ENCODE measurements at regions of chr15 and their contacts with region 1.

Region 1: GRCh38 chr15:67101911-67102598 is 36.7 kb downstream of the SMAD3 start:
- DNase-seq: peak; percentile 63
- ATAC-seq: peak; percentile 66
- H3K4me3 Mint-ChIP-seq: no peak overlapping the region
- H3K27ac Mint-ChIP-seq: no peak overlapping the region
- H3K4me1 Mint-ChIP-seq: peaks cover 29% of the 10 kb centered on the region
- H3K27me3 Mint-ChIP-seq: no peaks in the 10 kb centered on the region

Region 2: GRCh38 chr15:67049351-67050044 is 52.6 kb before region 1 on chr15:
- CTCF ChIA-PET with region 1: no interaction called
- POLR2A ChIA-PET with region 1: no interaction called
- DNase-seq: no peak
- ATAC-seq: no peak
- H3K4me3 Mint-ChIP-seq: no peak overlapping the region
- H3K27ac Mint-ChIP-seq: no peak overlapping the region
- H3K4me1 Mint-ChIP-seq: peaks cover 24% of the 10 kb centered on the region
- H3K27me3 Mint-ChIP-seq: no peaks in the 10 kb centered on the region

Region 3: DNA sequence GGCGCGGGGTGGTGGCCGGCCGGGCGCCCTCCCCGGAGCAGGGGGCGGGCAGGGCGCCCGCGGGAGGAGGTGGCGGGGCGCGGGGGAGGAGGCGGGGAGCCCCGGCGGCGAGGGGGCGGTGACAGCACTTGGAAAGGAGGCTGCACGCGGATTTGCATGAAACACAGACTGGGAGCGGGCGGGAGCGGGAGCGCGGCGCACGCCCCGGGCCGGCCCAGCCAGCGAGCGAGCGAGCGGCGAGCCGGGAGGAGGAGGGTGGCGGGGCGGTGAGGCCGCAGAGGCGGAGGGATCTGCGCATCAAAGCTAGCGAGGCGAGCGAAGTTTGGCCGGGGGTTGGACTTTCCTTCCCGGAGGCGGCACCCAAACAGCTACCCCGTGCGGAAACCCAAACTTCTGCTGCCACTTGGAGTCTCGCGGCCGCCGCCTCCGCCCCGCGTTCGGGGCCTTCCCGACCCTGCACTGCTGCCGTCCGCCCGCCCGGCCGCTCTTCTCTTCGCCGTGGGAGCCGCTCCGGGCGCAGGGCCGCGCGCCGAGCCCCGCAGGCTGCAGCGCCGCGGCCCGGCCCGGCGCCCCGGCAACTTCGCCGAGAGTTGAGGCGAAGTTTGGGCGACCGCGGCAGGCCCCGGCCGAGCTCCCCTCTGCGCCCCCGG is 36.5 kb before region 1 on chr15 and contains the start of gene SMAD3:
- CTCF ChIA-PET with region 1: interaction called, 8 read pairs
- POLR2A ChIA-PET with region 1: interaction called, 74 read pairs
- DNase-seq: peak; percentile 85
- ATAC-seq: peak; percentile 71
- H3K4me3 Mint-ChIP-seq: peak within 1 kb of the TSS; percentile 95
- H3K27ac Mint-ChIP-seq: peak within 1 kb of the TSS; percentile 87
- H3K4me1 Mint-ChIP-seq: peaks cover 52% of the 10 kb centered on the region
- H3K27me3 Mint-ChIP-seq: peaks cover 20% of the 10 kb centered on the region
- total RNA-seq, gene SMAD3: 26.8 to 27.1 TPM

Region 4: GRCh38 chr15:67080900-67081431 is 21.1 kb before region 1 on chr15:
- CTCF ChIA-PET with region 1: interaction called, 15 read pairs
- POLR2A ChIA-PET with region 1: interaction called, 38 read pairs
- DNase-seq: peak; percentile 49
- ATAC-seq: no peak
- H3K4me3 Mint-ChIP-seq: no peak overlapping the region
- H3K27ac Mint-ChIP-seq: peak overlapping the region; percentile 29
- H3K4me1 Mint-ChIP-seq: peaks cover 91% of the 10 kb centered on the region
- H3K27me3 Mint-ChIP-seq: no peaks in the 10 kb centered on the region

Region 5: GRCh38 chr15:67091071-67091979 is 10.7 kb before region 1 on chr15:
- CTCF ChIA-PET with region 1: interaction called, 8 read pairs
- POLR2A ChIA-PET with region 1: interaction called, 38 read pairs
- DNase-seq: peak; percentile 88
- ATAC-seq: peak; percentile 88
- H3K4me3 Mint-ChIP-seq: peak overlapping the region; percentile 54
- H3K27ac Mint-ChIP-seq: peak overlapping the region; percentile 68
- H3K4me1 Mint-ChIP-seq: peaks cover 100% of the 10 kb centered on the region
- H3K27me3 Mint-ChIP-seq: peaks cover 2% of the 10 kb centered on the region

Region 6: DNA sequence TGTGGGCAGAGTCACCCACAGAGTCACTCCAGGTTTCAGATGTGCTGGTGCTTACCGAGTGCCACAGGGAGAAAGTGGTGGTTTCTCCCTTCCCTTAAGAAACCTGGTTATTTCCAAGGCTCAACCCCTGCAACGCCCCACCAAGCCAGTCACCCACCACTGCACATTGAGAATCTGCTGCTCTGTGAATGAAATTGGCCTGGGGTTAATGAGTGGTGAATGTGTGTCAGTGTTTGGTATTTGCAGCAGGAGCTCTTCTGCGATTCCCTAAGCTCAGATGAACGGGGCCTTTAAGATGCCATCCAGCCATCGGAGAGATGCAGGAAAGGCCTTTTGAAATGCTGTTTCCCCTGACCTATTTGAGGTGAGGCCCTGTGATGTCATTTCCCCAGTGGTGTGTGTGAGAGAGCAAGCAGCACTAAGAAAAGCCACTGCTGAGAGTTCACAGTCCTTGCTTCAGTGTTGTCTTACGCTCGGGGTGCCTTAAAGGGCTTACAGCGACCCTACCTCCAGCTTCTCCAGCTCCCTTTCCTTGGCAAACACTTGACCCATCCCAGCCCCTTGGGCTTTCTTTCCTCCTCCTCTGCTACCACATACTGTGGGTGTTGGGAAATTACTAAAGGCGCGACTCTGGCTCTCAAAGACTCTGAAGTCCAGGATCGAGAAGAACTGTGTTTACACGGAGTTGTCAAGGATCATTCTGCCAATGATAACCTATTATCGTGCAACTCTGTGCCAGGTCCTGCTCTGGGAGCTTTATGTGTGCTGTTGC is 32.2 kb after region 1 on chr15:
- CTCF ChIA-PET with region 1: interaction called, 7 read pairs
- POLR2A ChIA-PET with region 1: interaction called, 23 read pairs
- DNase-seq: peak; percentile 86
- ATAC-seq: peak; percentile 97
- H3K4me3 Mint-ChIP-seq: peak overlapping the region; percentile 78
- H3K27ac Mint-ChIP-seq: peak overlapping the region; percentile 97
- H3K4me1 Mint-ChIP-seq: peaks cover 90% of the 10 kb centered on the region
- H3K27me3 Mint-ChIP-seq: no peaks in the 10 kb centered on the region

Measured in activated CD8-positive, alpha-beta T cell treated with anti-CD3 and anti-CD28 coated beads, Interleukin-2, amount 10 ng/mL, durations not matched to agents 7 days and 5 days (primary cell).